IMR-90 (cell line): ENCODE measurements at regions of chr3 and their contacts with region 1.

Region 1: DNA sequence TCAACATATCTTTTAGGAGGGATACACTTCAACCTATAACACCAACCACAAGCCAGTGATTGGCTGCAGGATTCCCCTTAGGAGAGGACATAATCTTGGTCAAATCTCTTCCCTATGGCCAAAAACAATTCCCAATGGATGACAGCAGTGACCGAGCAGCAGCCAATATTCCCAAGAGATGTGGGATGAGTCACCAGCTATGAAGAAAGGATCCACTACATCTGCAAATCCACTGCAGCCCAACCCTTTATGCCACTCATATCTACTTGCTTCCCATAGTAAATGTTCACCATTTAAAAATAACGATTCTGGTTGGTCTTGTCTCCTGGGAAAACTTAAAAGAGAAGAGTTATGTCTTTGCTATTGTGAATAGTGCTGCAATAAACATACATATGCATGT is 4.5 kb upstream of the IQCF5 start:
- DNase-seq: no peak
- ATAC-seq: no peak
- H3K4me3 ChIP-seq: no peak overlapping the region
- H3K27ac ChIP-seq: no peak overlapping the region
- H3K4me1 ChIP-seq: no peaks in the 10 kb centered on the region
- H3K27me3 ChIP-seq: no peaks in the 10 kb centered on the region; the same call in 1 of the 2 replicates
- CTCF ChIP-seq: no peak
- POLR2A ChIP-seq: no peak
- RAD21 ChIP-seq: no peak

Region 2: DNA sequence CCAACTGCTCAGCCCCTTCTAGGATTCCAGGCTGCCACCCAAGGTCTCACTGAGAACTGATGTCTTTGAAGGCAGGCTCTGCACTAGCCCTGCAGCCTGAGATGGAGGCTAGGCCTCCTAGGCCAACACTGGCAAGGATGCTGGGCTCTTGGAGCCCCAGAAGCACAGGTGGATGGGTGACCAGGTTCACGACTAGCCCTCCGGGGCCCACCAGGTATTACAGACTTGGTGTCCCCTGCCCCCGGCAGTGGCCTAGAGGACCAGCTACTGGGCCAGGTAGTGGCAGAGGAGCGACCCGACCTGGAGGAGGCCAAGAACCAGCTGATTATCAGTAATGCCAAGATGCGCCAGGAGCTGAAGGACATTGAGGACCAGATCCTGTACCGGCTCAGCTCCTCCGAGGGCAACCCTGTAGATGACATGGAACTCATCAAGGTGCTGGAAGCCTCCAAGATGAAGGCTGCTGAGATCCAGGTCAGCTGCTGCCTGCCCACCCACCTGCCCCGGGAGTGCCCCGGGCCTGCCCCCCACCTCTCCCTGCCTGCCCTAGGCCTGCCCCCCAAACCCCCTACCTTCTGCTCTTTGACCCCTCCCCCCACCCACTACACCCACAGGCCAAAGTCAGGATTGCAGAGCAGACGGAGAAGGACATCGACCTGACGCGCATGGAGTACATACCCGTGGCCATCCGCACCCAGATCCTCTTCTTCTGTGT is 512.4 kb after region 1 on chr3:
- CTCF ChIA-PET with region 1: no interaction called
- POLR2A ChIA-PET with region 1: interaction called, 10 read pairs
- dilution Hi-C with region 1: no loop called
- in situ Hi-C with region 1: no loop called
- intact Hi-C with region 1: no loop called
- DNase-seq: no peak
- ATAC-seq: no peak
- H3K4me3 ChIP-seq: no peak overlapping the region
- H3K27ac ChIP-seq: no peak overlapping the region
- H3K4me1 ChIP-seq: no peaks in the 10 kb centered on the region
- H3K27me3 ChIP-seq: no peaks in the 10 kb centered on the region; the same call in 1 of the 2 replicates
- CTCF ChIP-seq: no peak
- POLR2A ChIP-seq: no peak
- RAD21 ChIP-seq: no peak